Posterior cingulate gyrus (tissue), 11 donors: ENCODE measurements at regions of chr2 and their contacts with region 1.

Region 1: GRCh38 chr2:189096769-189097447 is 82.7 kb downstream of the COL5A2 start:
- DNase-seq: no peak

Region 2: DNA sequence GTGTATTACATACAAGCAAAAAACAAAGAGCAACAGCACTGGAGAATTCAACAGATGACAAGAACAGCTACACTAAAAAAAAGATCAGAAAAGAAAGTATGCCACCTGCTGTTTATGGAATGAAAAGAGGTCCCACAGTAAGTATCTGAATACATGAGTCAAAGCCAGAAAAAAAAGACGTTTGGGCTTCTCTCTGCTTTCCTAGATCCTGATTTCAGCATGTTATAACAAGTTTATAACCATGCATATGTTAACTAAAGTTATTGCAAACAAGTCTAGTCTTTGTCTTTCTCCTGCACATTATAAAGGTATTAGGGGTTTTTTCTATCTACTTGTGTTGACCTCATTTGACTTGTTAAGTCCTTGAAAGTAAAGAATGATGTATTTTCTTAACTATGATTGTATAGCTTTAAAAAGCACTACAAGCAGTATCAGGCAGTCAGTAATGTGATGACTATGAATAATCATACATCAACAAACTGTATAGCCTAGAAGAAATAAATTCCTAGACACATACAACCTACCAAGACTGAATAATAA is 191.1 kb after region 1 on chr2:
- intact Hi-C with region 1: loop called (anchors 10 kb)
- DNase-seq: no peak

Region 3: DNA sequence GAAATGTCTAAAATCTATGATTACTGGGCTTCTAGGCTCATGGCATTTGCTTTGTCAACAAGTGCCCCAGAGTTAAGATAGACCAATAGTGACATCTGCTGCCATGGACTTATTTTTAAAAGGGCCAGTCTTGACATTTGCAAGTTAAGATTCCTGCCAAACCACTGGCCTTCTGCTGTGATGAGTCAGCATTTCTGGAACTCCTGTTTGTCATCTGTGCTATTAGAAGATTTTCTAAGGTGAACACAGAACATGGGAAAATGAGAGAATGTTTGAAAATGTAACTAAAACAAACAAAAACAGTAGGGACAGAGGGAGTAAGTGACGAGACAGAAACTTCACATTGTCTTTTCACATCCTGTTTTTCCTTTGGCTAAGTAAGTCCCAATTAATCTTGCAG is 250.6 kb after region 1 on chr2:
- intact Hi-C with region 1: loop called (anchors 2 kb)
- DNase-seq: no peak

Region 4: DNA sequence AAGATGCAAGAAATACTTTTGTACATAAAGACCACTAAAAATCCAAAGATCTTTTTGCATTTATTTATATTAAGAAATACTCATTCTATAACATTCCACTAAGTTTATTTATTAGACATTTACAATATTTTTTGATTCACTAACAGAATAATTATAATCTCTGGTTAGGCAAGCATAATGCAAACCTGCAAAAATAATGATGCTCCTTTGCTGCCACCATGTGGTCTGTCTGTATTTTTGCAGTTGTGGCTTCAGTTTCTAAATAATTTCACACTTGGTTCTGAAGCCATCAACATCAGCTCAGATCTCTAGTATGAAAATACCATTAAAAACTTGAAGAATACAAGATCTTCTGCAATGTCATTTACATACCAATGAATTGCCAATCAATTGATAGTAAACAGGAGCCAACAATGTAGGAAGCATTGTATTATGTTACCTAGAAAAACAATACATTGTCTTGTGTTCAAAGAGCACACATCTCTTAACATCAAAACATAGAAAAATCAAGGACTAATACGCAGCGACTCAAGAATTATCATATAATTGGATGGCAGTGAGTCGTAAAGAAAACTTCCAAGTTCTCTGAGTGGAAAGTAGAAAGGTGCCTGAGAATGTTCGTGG is 315.5 kb after region 1 on chr2:
- intact Hi-C with region 1: loop called (anchors 2 kb)
- DNase-seq: peak in 4 of 10 donors; percentile 20 to 42 (median 30)